ENCODE measurements at regions of chr1 and their contacts with region 1.

Region 1: DNA sequence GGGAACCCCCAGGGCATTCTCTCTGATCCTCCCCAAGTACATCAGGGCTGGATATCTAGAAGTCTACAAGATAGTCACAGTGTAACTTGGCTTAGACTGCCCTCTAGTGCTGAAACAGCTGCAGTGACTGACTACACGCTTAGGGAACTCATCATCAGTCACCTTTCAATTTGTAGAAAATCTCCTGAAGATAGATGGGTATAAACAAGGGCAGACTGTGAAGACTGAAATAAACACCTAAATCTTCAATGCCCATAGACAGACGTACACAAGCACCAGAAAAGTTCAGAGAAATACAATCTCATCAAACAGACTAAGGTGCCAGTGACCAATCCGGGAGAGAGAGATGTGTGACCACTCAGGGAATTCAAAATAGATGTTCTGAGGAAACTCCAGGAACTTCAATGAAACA is 46.6 kb downstream of the PACC1 start:
- H3K4me3 ChIP-seq: no peak overlapping the region
- H3K27ac ChIP-seq: no peak overlapping the region
- H3K4me1 ChIP-seq: no peaks in the 10 kb centered on the region
- CTCF ChIP-seq: no peak

Region 2: GRCh38 chr1:212284744-212285684 is 83.1 kb before region 1 on chr1 and contains the start of gene PPP2R5A:
- CTCF ChIA-PET with region 1: interaction called, 16 read pairs
- POLR2A ChIA-PET with region 1: no interaction called
- H3K4me3 ChIP-seq: peak within 1 kb of the TSS; percentile 82
- H3K27ac ChIP-seq: peak within 1 kb of the TSS; percentile 82
- H3K4me1 ChIP-seq: 0 out of 2 replicates have a peak, but pooled peaks cover 3% of the 10 kb centered on the region
- CTCF ChIP-seq: peak; percentile 96